GM12878 (cell line): ENCODE measurements at regions of chr11 and their contacts with region 1.

Region 1: GRCh38 chr11:117226388-117227385 is 5.2 kb downstream of the PCSK7 start:
- DNase-seq: peak; percentile 35
- ATAC-seq: peak; percentile 79
- H3K4me3 ChIP-seq: no peak overlapping the region
- H3K27ac ChIP-seq: no peak overlapping the region
- H3K4me1 ChIP-seq: peaks cover 9% of the 10 kb centered on the region
- H3K27me3 ChIP-seq: no peaks in the 10 kb centered on the region
- CTCF ChIP-seq: peak; percentile 74 to 90 (median 80); a peak in 5 of 6 replicates
- EP300 ChIP-seq: no peak
- POLR2A ChIP-seq: no peak
- RAD21 ChIP-seq: peak; percentile 90

Region 2: DNA sequence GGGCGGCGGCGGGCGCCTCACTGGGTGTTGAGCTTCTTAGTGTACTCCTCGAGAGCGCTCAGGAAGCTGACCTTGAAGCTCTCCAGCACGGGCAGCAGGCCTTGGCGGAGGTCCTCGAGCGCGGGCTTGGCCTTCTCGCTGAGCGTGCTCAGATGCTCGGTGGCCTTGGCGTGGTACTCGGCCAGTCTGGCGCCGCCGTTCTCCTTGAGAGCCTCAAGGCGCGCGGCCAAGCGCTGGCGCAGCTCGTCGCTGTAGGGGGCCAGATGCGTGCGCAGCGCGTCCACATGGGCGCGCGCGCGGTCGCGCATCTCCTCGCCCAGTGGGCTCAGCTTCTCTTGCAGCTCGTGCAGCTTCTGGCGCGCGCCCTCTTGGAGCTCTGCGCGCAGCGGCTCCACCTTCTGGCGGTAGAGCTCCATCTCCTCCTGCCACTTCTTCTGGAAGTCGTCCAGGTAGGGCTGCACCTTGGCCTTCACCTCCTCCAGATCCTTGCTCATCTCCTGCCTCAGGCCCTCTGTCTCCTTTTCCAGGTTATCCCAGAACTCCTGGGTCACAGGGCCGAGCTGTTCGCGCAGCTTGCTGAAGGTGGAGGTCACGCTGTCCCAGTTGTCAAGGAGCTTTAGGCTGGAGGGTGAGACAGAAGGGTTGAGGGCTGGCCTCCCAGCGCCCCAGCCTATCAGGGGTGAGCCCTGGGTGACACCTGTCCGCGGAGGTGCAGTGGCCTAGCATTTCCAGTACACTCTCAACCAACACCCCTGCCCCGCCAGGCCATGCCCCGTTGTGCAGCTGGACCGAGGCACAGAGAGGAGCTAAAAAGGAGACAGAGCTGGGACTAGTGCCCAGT is 390.7 kb before region 1 on chr11:
- CTCF ChIA-PET with region 1: interaction called, 6 read pairs
- POLR2A ChIA-PET with region 1: interaction called, 4 read pairs
- RAD21 ChIA-PET with region 1: no interaction called
- SMC1A ChIA-PET with region 1: interaction called, 6 read pairs
- in situ Hi-C with region 1: no loop called
- intact Hi-C with region 1: loop called (anchors 5 kb)
- DNase-seq: peak; percentile 57
- ATAC-seq: peak; percentile 94
- H3K4me3 ChIP-seq: peak overlapping the region; percentile 52; the same call in 1 of the 2 replicates
- H3K27ac ChIP-seq: peak overlapping the region; percentile 20; the same call in 1 of the 2 replicates
- H3K4me1 ChIP-seq: peaks cover 8% of the 10 kb centered on the region; the same call in 1 of the 2 replicates
- H3K27me3 ChIP-seq: no peaks in the 10 kb centered on the region
- CTCF ChIP-seq: peak; percentile 68 to 81 (median 75)
- EP300 ChIP-seq: no peak
- POLR2A ChIP-seq: peak; percentile 83
- RAD21 ChIP-seq: peak; percentile 60

Region 3: GRCh38 chr11:116895048-116895757 is 331.5 kb before region 1 on chr11:
- CTCF ChIA-PET with region 1: no interaction called
- POLR2A ChIA-PET with region 1: no interaction called
- RAD21 ChIA-PET with region 1: no interaction called
- SMC1A ChIA-PET with region 1: no interaction called
- in situ Hi-C with region 1: no loop called
- intact Hi-C with region 1: no loop called
- DNase-seq: no peak
- ATAC-seq: no peak
- H3K4me3 ChIP-seq: no peak overlapping the region
- H3K27ac ChIP-seq: no peak overlapping the region
- H3K4me1 ChIP-seq: 0 out of 2 replicates have a peak, but pooled peaks cover 3% of the 10 kb centered on the region
- H3K27me3 ChIP-seq: no peaks in the 10 kb centered on the region
- CTCF ChIP-seq: peak in 2 of 3 experiments; percentile 4 to 34; a peak in 2 of 6 replicates
- EP300 ChIP-seq: no peak
- POLR2A ChIP-seq: no peak
- RAD21 ChIP-seq: peak; percentile 51

Region 4: GRCh38 chr11:117107701-117108590 is 118.7 kb before region 1 on chr11:
- CTCF ChIA-PET with region 1: interaction called, 26 read pairs
- POLR2A ChIA-PET with region 1: interaction called, 3 read pairs
- RAD21 ChIA-PET with region 1: interaction called, 4 read pairs
- SMC1A ChIA-PET with region 1: interaction called, 13 read pairs
- in situ Hi-C with region 1: no loop called
- intact Hi-C with region 1: loop called (anchors 2 kb)
- DNase-seq: no peak
- ATAC-seq: no peak
- H3K4me3 ChIP-seq: no peak overlapping the region
- H3K27ac ChIP-seq: no peak overlapping the region
- H3K4me1 ChIP-seq: no peaks in the 10 kb centered on the region
- H3K27me3 ChIP-seq: no peaks in the 10 kb centered on the region
- CTCF ChIP-seq: no peak
- EP300 ChIP-seq: no peak
- POLR2A ChIP-seq: no peak
- RAD21 ChIP-seq: no peak

Region 5: DNA sequence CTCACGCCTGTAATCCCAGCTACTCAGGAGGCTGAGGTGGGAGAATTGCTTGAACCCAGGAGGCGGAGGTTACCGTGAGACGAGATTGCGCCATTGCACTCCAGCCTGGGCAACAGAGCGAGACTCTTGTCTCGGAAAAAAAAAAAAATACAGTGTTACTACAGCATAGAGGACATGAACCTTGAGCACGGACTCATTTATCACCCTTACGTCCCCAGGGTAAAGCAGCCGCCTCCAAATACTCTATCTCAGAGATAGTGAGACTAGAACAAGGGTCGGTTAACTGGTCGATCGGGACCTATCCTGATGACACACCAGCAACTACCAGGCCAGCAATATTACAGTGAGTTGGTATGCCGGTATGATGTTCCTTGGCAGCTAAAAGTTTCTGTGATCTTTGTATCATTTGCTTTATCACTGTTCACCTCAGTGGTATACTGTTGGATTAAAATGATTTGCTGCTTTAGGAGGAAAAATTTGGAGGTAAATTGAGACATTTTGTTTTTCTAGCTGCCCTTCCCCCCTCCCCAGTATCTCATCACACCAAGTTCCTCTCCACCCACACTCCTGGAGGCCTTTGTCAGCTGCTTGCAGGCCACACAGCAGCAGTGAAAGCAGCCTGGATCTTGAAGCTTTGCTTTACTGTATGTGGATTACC is 55.2 kb before region 1 on chr11:
- CTCF ChIA-PET with region 1: interaction called, 422 read pairs
- POLR2A ChIA-PET with region 1: no interaction called
- RAD21 ChIA-PET with region 1: interaction called, 3 read pairs
- SMC1A ChIA-PET with region 1: interaction called, 5 read pairs
- in situ Hi-C with region 1: no loop called
- intact Hi-C with region 1: no loop called
- DNase-seq: no peak
- ATAC-seq: no peak
- H3K4me3 ChIP-seq: no peak overlapping the region
- H3K27ac ChIP-seq: no peak overlapping the region
- H3K4me1 ChIP-seq: no peaks in the 10 kb centered on the region
- H3K27me3 ChIP-seq: no peaks in the 10 kb centered on the region
- CTCF ChIP-seq: no peak
- EP300 ChIP-seq: no peak
- POLR2A ChIP-seq: 0 out of 2 replicates have a peak, but pooled peaks have one; percentile 43
- RAD21 ChIP-seq: no peak

Region 6: GRCh38 chr11:117197516-117198456 is 28.9 kb before region 1 on chr11:
- CTCF ChIA-PET with region 1: interaction called, 18 read pairs
- POLR2A ChIA-PET with region 1: interaction called, 3 read pairs
- RAD21 ChIA-PET with region 1: no interaction called
- SMC1A ChIA-PET with region 1: interaction called, 4 read pairs
- in situ Hi-C with region 1: no loop called
- intact Hi-C with region 1: no loop called
- DNase-seq: no peak
- ATAC-seq: 0 out of 3 replicates have a peak, but pooled peaks have one; percentile 15
- H3K4me3 ChIP-seq: no peak overlapping the region
- H3K27ac ChIP-seq: no peak overlapping the region
- H3K4me1 ChIP-seq: no peaks in the 10 kb centered on the region
- H3K27me3 ChIP-seq: no peaks in the 10 kb centered on the region
- CTCF ChIP-seq: peak; percentile 7 to 27 (median 27); a peak in 2 of 6 replicates
- EP300 ChIP-seq: no peak
- POLR2A ChIP-seq: no peak
- RAD21 ChIP-seq: no peak